ACHN (cell line): ENCODE measurements at regions of chr1 and their contacts with region 1.

Region 1: GRCh38 chr1:200488375-200489165 is 78.7 kb upstream of the ZNF281 start:
- DNase-seq: peak; percentile 85

Region 2: GRCh38 chr1:200279810-200280411 is 208.7 kb before region 1 on chr1:
- in situ Hi-C with region 1: loop called (anchors 25 kb)
- DNase-seq: peak; percentile 77

Region 3: GRCh38 chr1:200951016-200951415 is 462.4 kb after region 1 on chr1:
- in situ Hi-C with region 1: no loop called
- DNase-seq: no peak